Mammary epithelial cell (primary cell): ENCODE measurements at regions of chr11 and their contacts with region 1.

Region 1: DNA sequence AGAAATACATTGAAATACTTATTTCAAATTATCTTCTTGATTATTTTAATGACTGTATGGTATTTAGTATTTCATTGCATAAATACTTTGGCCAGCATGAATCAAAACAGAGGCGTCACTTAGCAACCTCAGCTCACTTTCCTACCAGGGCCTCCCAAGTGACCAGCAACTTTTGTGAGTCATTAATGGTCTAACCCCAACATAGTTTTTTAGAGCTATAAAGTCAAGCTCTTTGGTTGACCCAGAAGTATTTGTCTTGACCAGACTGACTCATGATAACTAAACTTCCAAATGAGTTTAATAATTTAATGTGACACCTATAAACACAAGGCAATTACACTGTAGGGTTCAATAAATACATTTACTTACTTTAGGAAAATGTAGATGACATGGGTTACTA is 27.9 kb upstream of the RBMXL2 start:
- DNase-seq: peak; percentile 17
- H3K4me3 ChIP-seq: no peak overlapping the region
- H3K27ac ChIP-seq: no peak overlapping the region
- H3K4me1 ChIP-seq: no peaks in the 10 kb centered on the region
- H3K27me3 ChIP-seq: no peaks in the 10 kb centered on the region
- CTCF ChIP-seq: no peak

Region 2: DNA sequence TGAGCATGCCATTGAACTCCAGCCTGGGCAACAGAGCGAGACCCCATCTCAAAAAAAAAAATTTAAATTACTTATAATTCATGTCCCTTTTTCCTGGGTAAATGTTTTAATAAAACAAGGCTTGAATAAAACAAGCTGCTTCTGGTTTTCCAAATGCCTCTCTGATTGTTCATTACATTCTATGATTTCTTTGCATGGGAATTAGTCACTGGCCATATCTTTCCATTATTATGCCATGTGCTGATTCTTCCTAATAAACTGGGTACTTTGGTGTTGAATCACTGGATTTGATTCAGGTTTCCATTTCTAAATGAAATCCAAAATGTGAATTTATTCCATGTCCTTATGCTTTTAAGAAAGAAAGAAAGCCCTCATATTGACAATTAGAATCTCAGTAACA is 92.1 kb before region 1 on chr11:
- CTCF ChIA-PET with region 1: no interaction called
- dilution Hi-C with region 1: loop called (anchors 5 kb)
- in situ Hi-C with region 1: no loop called
- intact Hi-C with region 1: no loop called
- DNase-seq: peak; percentile 50
- H3K4me3 ChIP-seq: no peak overlapping the region
- H3K27ac ChIP-seq: no peak overlapping the region
- H3K4me1 ChIP-seq: no peaks in the 10 kb centered on the region
- H3K27me3 ChIP-seq: no peaks in the 10 kb centered on the region
- CTCF ChIP-seq: no peak

Region 3: DNA sequence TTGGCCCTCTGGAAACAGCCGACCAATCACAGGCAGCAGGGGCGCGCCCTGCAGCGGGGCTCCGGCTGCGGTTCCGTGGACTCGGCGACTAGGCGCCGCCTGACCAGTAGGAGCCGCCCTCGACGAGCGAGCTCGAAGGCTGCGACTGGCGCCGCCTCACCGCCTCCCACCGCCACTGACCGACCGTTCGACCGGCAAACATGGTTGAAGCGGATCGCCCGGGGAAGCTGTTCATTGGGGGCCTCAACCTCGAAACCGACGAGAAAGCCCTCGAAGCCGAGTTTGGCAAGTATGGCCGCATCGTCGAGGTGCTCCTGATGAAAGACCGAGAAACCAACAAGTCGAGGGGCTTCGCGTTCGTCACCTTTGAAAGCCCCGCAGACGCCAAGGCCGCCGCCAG is 28.1 kb after region 1 on chr11 and contains the start of gene RBMXL2:
- CTCF ChIA-PET with region 1: no interaction called
- dilution Hi-C with region 1: no loop called
- in situ Hi-C with region 1: no loop called
- intact Hi-C with region 1: no loop called
- DNase-seq: no peak
- H3K4me3 ChIP-seq: no peak within 1 kb of the TSS
- H3K27ac ChIP-seq: no peak within 1 kb of the TSS
- H3K4me1 ChIP-seq: no peaks in the 10 kb centered on the region
- H3K27me3 ChIP-seq: no peaks in the 10 kb centered on the region
- CTCF ChIP-seq: no peak
- total RNA-seq, gene RBMXL2: 0.21 TPM in 1 of 2 donors, not detected in the other